Activated CD4-positive, alpha-beta T cell treated with anti-CD3 and anti-CD28 coated beads, Interleukin-2, amount 10 ng/mL, durations not matched to agents 24 days and 14 days (primary cell): ENCODE measurements at regions of chr10 and their contacts with region 1.

Region 1: GRCh38 chr10:5434017-5434753 is 21.8 kb downstream of the NET1 start:
- DNase-seq: peak; percentile 73
- H3K4me3 Mint-ChIP-seq: peak overlapping the region; percentile 10
- H3K27ac Mint-ChIP-seq: peak overlapping the region; percentile 70
- H3K4me1 Mint-ChIP-seq: peaks cover 15% of the 10 kb centered on the region
- H3K27me3 Mint-ChIP-seq: no peaks in the 10 kb centered on the region

Region 2: DNA sequence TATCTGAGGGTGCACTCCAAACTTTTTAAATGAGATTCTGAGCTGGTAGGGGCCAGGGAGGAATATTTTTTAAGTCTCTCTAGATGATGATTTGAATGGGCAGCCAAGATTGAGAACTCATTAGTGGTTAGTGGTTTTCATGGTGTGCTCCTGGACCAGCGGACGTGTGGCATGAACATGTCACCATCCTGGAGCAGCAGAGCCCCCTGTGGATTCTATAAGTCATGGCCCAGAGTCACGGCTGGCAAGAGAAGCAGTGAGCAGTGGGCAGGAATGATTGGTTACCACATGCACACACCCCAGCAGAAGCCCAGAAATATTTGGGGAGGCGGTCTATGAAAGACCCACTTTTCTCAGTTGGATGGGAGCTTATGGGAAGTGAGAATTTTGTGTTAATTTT is 90.6 kb before region 1 on chr10:
- intact Hi-C with region 1: no loop called
- DNase-seq: no peak
- H3K4me3 Mint-ChIP-seq: no peak overlapping the region
- H3K27ac Mint-ChIP-seq: no peak overlapping the region
- H3K4me1 Mint-ChIP-seq: no peaks in the 10 kb centered on the region
- H3K27me3 Mint-ChIP-seq: no peaks in the 10 kb centered on the region

Region 3: DNA sequence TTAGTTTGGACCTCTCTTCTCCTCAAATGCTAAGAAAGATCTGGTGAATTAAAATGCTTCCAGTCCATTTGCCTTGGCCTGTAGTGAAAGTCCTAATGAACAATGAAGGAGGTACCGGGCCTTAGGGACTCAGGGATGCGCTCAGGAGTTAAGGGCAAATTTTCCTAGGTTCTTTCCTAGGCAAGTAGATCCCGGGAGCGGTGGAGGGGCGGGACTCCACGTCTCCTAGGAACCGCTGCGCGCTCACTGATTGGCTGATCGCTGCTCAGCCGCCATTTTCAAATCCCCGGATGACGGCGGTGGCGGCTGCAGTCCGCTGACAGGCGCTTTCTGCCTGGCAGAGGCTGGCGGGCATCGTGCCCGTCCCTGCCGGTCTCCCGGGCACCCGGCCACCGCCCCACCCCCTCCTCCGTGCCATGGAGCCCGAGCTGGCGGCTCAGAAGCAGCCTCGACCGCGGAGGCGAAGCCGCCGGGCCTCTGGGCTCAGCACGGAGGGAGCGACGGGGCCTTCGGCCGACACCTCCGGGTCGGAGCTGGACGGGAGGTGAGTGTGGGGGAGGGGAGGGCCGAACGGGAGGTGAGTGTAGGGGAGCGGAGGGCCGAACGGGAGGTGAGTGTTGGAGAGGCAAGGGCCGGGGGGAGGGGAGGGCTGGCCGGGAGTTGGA is 21.8 kb before region 1 on chr10 and contains the start of gene NET1:
- intact Hi-C with region 1: loop called (anchors 1 kb)
- DNase-seq: peak; percentile 93
- H3K4me3 Mint-ChIP-seq: no peak within 1 kb of the TSS
- H3K27ac Mint-ChIP-seq: peak within 1 kb of the TSS; percentile 43
- H3K4me1 Mint-ChIP-seq: peaks cover 8% of the 10 kb centered on the region
- H3K27me3 Mint-ChIP-seq: peaks cover 25% of the 10 kb centered on the region
- total RNA-seq, gene NET1: 35.1 and 40.3 TPM in 2 replicates

Region 4: GRCh38 chr10:5525561-5526341 is 91.6 kb after region 1 on chr10:
- intact Hi-C with region 1: no loop called
- DNase-seq: no peak
- H3K4me3 Mint-ChIP-seq: no peak overlapping the region
- H3K27ac Mint-ChIP-seq: no peak overlapping the region
- H3K4me1 Mint-ChIP-seq: no peaks in the 10 kb centered on the region
- H3K27me3 Mint-ChIP-seq: peaks cover 3% of the 10 kb centered on the region

Region 5: DNA sequence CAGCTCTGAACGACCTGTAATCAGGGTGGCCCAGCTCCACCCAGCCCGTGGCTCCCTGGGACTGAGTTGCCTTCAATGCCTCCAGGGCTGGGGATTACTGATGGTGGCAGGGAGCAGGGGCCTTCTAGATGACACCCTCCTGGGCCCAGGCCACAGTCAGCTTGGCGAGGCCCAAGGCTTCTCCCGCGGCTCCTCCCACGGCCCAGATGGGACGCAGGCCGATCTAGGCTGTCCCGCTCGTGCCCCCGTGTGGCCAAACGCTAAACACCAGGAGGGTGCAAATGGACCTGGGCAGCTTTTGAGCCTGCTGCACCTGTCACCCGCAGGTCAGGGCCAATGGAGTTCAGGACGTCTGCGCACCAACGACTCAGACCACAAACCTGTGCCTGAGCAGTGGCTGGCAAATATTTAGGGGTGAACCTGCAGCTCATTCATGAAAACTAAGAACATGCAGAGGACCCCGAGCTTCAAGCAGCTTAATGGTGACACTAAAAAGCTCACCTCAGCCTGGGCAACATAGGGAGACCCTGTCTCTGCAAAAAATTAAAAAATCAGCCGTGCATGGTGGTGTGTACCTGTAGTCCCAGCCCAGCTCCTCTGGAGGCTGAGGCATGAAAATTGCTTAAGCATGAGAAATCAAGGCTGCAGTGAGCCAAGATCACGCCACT is 189.0 kb after region 1 on chr10:
- intact Hi-C with region 1: loop called (anchors 2 kb)
- DNase-seq: peak; percentile 95
- H3K4me3 Mint-ChIP-seq: no peak overlapping the region
- H3K27ac Mint-ChIP-seq: no peak overlapping the region
- H3K4me1 Mint-ChIP-seq: peaks cover 5% of the 10 kb centered on the region
- H3K27me3 Mint-ChIP-seq: no peaks in the 10 kb centered on the region